Dendritic cell treated with granulocyte-macrophage colony-stimulating factor and Interleukin-4, amounts not matched to agents 40 ng/mL and 50 ng/mL, for 4 days (primary cell): ENCODE measurements at regions of chr2 and their contacts with region 1.

Region 1: DNA sequence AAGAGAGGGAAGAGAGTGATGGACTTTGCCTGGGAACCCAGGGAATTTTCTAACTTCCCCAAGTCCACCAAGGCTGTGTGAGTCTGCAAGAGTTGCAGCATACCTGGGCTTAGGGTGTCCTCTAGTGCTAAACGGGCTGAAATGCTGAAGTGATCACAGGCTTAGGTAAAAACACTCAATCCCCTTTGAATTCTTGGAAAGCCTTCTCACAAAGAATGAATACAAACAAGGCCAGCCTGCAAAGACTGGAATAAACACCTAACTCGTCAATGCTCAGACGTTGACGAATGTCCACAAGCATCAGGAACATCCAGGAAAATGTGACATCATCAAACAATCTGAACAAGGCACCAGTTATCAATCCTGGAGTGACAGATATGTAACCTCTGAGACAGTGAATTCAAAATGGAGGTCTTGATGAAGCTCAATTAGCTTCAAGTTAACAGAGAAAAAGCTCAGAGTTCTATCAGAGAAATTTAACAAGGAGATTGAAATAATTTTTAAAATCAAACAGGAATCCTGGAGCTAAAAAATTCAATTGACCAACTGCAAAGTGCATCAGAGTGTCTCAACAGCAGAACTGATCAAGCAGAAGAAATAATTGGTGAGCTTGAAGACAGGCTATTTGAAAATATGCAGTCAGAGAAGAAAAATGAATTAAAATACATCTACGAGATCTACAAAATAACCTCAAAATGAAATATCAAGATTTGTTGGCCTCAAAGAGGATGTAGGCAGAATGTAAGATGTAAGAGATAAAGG is 30.2 kb upstream of the BMP10 start:
- H3K4me3 Mint-ChIP-seq: no peak overlapping the region
- H3K27ac Mint-ChIP-seq: no peak overlapping the region
- H3K4me1 Mint-ChIP-seq: peaks cover 26% of the 10 kb centered on the region
- H3K27me3 Mint-ChIP-seq: no peaks in the 10 kb centered on the region

Region 2: GRCh38 chr2:68741238-68741637 is 160.1 kb before region 1 on chr2:
- intact Hi-C with region 1: no loop called
- H3K4me3 Mint-ChIP-seq: peak overlapping the region; percentile 74
- H3K27ac Mint-ChIP-seq: no peak overlapping the region
- H3K4me1 Mint-ChIP-seq: peaks cover 74% of the 10 kb centered on the region
- H3K27me3 Mint-ChIP-seq: no peaks in the 10 kb centered on the region

Region 3: GRCh38 chr2:68751397-68752339 is 149.7 kb before region 1 on chr2:
- intact Hi-C with region 1: no loop called
- H3K4me3 Mint-ChIP-seq: no peak overlapping the region
- H3K27ac Mint-ChIP-seq: peak overlapping the region; percentile 56
- H3K4me1 Mint-ChIP-seq: peaks cover 85% of the 10 kb centered on the region
- H3K27me3 Mint-ChIP-seq: no peaks in the 10 kb centered on the region

Region 4: GRCh38 chr2:68865108-68865507 is 36.3 kb before region 1 on chr2:
- intact Hi-C with region 1: loop called (anchors 5 kb)
- H3K4me3 Mint-ChIP-seq: no peak overlapping the region
- H3K27ac Mint-ChIP-seq: peak overlapping the region; percentile 22
- H3K4me1 Mint-ChIP-seq: peaks cover 47% of the 10 kb centered on the region
- H3K27me3 Mint-ChIP-seq: no peaks in the 10 kb centered on the region

Region 5: DNA sequence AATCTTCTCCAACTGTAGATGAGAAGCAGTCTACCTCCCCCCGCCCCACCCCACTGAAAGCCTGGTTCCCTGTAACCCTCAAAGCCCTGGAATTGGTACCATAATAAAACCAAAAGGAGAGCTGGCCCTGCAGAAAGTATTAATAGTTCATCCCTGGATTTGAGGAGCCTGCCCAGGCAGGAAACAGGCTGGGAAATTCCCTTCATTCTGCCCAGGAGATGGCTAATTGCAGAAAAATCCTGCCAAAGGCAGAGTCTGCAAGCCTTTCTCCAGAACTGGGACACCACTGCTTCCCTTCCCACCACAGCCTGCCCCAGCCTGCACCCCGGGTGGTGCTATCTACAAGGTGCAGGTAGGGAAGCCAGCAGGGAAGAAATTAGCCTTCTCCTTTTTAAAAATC is 35.0 kb after region 1 on chr2:
- intact Hi-C with region 1: no loop called
- H3K4me3 Mint-ChIP-seq: no peak overlapping the region
- H3K27ac Mint-ChIP-seq: no peak overlapping the region
- H3K4me1 Mint-ChIP-seq: peaks cover 5% of the 10 kb centered on the region
- H3K27me3 Mint-ChIP-seq: peaks cover 7% of the 10 kb centered on the region